HCT116 (cell line): ENCODE measurements at regions of chr14 and their contacts with region 1.

Region 1: DNA sequence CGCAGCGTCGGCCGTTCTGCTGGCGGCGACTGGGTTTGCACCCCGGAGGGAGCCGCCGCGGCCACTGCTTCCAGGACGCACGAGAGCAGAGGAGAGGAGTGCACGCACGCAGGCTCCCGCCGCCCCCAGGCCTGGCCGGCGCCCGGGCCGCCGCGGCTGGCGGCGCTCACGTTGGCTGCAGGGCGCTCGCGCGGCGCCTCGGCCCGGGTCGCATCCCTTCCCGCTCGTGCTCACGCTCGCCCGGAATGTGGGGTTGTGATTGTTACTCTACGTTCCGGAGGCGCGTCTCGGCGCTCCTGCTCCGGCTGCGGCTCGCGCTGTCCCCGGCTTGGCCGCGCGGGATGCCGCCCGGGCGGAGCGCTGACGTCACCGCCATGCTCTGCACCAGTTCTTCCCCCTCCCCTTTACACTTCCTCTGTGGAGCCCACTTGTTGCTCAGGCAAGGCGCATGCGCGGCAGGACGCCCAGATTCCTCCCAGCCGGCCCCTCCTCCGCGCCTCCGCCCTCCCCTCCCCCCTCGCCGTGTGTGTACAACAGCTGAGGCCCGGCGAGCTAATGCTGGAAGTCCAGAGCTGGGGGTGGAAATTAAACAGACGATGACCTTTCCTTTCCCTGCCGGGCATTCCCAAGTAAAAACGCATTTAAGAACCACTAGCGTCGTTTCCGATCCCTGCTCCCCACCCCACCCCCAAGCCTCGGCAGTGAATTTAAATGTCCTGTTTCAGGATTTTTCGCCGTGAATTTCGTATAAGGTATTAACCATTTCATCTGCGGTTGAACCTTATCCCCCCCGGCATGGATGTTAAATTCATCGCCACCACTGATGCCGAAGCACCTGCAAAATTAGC is at the start of gene IRF2BPL:
- DNase-seq: peak; percentile 91
- ATAC-seq: peak; percentile 81
- H3K4me3 ChIP-seq: peak within 1 kb of the TSS; percentile 61 to 89
- H3K27ac ChIP-seq: peak within 1 kb of the TSS; percentile 100
- H3K4me1 ChIP-seq: peaks cover 70 to 73% of the 10 kb centered on the region in 2 experiments
- H3K27me3 ChIP-seq: no peaks in the 10 kb centered on the region
- CTCF ChIP-seq: no peak
- POLR2A ChIP-seq: peak; percentile 92
- RAD21 ChIP-seq: no peak
- total RNA-seq, gene IRF2BPL: 74.6 TPM

Region 2: DNA sequence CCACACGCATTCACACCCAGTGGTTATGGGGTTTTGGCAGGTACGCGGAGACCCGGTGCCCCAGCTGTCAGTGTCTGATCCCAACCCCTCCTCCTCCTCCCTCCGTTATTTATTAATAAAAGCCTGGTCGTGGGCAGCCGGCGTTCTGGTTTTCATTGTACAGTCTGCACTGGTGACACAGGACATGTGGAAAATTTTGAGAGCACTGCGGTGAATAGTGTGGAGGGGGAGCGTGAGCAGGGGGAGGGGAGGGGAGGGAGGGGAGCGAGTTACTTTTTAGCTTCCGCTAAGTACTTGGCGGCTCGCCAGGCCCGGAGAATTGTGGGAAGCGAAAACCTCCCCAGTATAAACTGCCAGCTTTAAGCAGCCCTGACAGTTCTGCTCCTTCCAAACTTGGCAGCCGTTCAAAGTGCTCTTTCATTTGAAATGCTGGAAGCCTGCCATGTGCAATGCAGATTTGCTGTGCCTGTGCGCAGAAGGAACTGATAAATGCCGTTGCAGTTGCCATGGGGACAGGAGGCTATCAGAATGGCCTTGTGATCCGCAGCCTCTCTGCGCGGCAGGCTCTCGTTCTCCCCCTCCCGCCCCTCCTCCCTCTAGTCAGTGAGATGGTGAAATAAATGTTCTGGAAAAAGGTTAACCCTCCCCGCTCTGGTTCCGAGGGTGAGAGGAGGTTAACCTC is 11.6 kb after region 1 on chr14:
- CTCF ChIA-PET with region 1: interaction called, 5 read pairs
- POLR2A ChIA-PET with region 1: interaction called, 18 read pairs
- RAD21 ChIA-PET with region 1: interaction called in 1 of 2 experiments, 3 read pairs
- intact Hi-C with region 1: no loop called
- DNase-seq: peak; percentile 94
- ATAC-seq: peak; percentile 77
- H3K4me3 ChIP-seq: peak overlapping the region; percentile 35 to 49
- H3K27ac ChIP-seq: peak overlapping the region; percentile 87
- H3K4me1 ChIP-seq: peaks cover 72 to 77% of the 10 kb centered on the region in 2 experiments
- H3K27me3 ChIP-seq: no peaks in the 10 kb centered on the region
- CTCF ChIP-seq: no peak
- POLR2A ChIP-seq: no peak
- RAD21 ChIP-seq: no peak